B cell (primary cell): ENCODE measurements at regions of chr17 and their contacts with region 1.

Region 1: GRCh38 chr17:5592382-5592781 is 8.1 kb upstream of the NLRP1 start:
- DNase-seq: peak; percentile 63
- ATAC-seq: peak; percentile 31
- H3K4me3 ChIP-seq: no peak overlapping the region
- H3K4me3 Mint-ChIP-seq: no peak overlapping the region
- H3K27ac ChIP-seq: no peak overlapping the region
- H3K27ac Mint-ChIP-seq: no peak overlapping the region
- H3K4me1 ChIP-seq: peaks cover 0 to 1% of the 10 kb centered on the region in 2 donors
- H3K4me1 Mint-ChIP-seq: peaks cover 1% of the 10 kb centered on the region
- H3K27me3 ChIP-seq: peaks cover 0 to 23% (median 3%) of the 10 kb centered on the region in 4 experiments
- H3K27me3 Mint-ChIP-seq: peaks cover 32% of the 10 kb centered on the region
- CTCF ChIP-seq: peak; percentile 76

Region 2: DNA sequence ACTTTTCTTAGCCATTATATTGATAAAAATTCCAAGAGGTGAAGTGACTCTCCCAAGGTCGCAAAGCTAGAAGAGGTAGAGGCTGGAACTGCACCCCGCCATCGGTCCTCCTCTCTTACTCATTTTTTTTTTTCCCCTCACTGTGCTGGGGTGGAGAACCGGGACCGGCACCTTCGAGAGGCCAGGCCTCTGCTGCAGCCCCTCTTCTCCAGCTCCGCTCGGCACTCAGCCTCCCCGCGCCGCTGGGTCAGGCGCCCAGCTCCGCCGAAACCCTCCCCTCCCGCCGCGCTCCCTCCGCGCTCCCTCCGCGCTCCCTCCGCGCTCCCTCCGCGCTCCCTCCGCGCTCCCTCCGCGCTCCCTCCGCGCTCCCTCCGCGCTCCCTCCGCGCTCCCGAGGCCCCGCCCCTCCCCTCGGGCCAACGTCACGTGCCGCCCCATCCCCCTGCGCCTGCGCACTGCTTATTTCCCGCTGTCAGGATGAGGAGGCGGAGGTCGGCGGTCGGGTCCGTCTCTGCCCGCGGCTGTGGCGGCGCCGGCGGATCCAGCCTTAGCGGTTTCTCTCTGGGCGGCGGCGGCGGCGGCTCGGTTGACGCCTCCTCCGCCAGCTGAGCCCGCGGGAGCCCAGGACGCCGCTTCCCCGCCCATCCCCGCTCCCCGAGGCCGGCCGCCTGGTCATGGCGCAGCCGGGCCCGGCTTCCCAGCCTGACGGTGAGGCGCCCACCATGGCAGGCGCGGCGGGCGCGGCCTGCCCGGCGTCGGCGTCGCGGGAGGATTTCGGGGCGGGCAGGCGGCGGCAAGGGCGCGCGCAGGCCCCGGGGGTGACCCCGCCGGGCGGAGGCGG is 310.3 kb before region 1 on chr17 and contains the start of gene RABEP1:
- CTCF ChIA-PET with region 1: no interaction called
- POLR2A ChIA-PET with region 1: no interaction called
- intact Hi-C with region 1: no loop called
- DNase-seq: peak; percentile 94
- ATAC-seq: peak; percentile 85
- H3K4me3 ChIP-seq: peak within 1 kb of the TSS; percentile 63 to 90 (median 75)
- H3K4me3 Mint-ChIP-seq: peak within 1 kb of the TSS; percentile 88
- H3K27ac ChIP-seq: peak within 1 kb of the TSS; percentile 33 to 69
- H3K27ac Mint-ChIP-seq: peak within 1 kb of the TSS; percentile 94
- H3K4me1 ChIP-seq: peaks cover 38 to 44% of the 10 kb centered on the region in 2 donors
- H3K4me1 Mint-ChIP-seq: peaks cover 40% of the 10 kb centered on the region
- H3K27me3 ChIP-seq: no peaks in the 10 kb centered on the region
- H3K27me3 Mint-ChIP-seq: no peaks in the 10 kb centered on the region
- CTCF ChIP-seq: peak; percentile 14
- total RNA-seq, gene RABEP1: 86.1 and 91.1 TPM in 2 replicates

Region 3: GRCh38 chr17:5706577-5707216 is 114.3 kb after region 1 on chr17:
- CTCF ChIA-PET with region 1: interaction called, 38 read pairs
- POLR2A ChIA-PET with region 1: no interaction called
- intact Hi-C with region 1: no loop called
- DNase-seq: peak; percentile 66
- ATAC-seq: peak; percentile 41
- H3K4me3 ChIP-seq: no peak overlapping the region
- H3K4me3 Mint-ChIP-seq: no peak overlapping the region
- H3K27ac ChIP-seq: no peak overlapping the region
- H3K27ac Mint-ChIP-seq: no peak overlapping the region
- H3K4me1 ChIP-seq: no peaks in the 10 kb centered on the region
- H3K4me1 Mint-ChIP-seq: no peaks in the 10 kb centered on the region
- H3K27me3 ChIP-seq: peaks cover 0 to 16% (median 0%) of the 10 kb centered on the region in 4 experiments
- H3K27me3 Mint-ChIP-seq: peaks cover 29% of the 10 kb centered on the region
- CTCF ChIP-seq: peak; percentile 70

Region 4: GRCh38 chr17:6421700-6422604 is 829.6 kb after region 1 on chr17:
- CTCF ChIA-PET with region 1: interaction called, 44 read pairs
- POLR2A ChIA-PET with region 1: no interaction called
- intact Hi-C with region 1: loop called (anchors 1 kb)
- DNase-seq: peak; percentile 74
- ATAC-seq: peak; percentile 51
- H3K4me3 ChIP-seq: no peak overlapping the region
- H3K4me3 Mint-ChIP-seq: no peak overlapping the region
- H3K27ac ChIP-seq: no peak overlapping the region
- H3K27ac Mint-ChIP-seq: no peak overlapping the region
- H3K4me1 ChIP-seq: peaks cover 0 to 4% of the 10 kb centered on the region in 2 donors
- H3K4me1 Mint-ChIP-seq: peaks cover 4% of the 10 kb centered on the region
- H3K27me3 ChIP-seq: peaks cover 0 to 4% (median 0%) of the 10 kb centered on the region in 4 experiments
- H3K27me3 Mint-ChIP-seq: peaks cover 15% of the 10 kb centered on the region
- CTCF ChIP-seq: peak; percentile 81

Region 5: GRCh38 chr17:6427279-6427781 is 834.9 kb after region 1 on chr17:
- CTCF ChIA-PET with region 1: interaction called, 44 read pairs
- POLR2A ChIA-PET with region 1: no interaction called
- intact Hi-C with region 1: loop called (anchors 1 kb)
- DNase-seq: peak; percentile 47
- ATAC-seq: no peak
- H3K4me3 ChIP-seq: no peak overlapping the region
- H3K4me3 Mint-ChIP-seq: peak overlapping the region; percentile 20
- H3K27ac ChIP-seq: no peak overlapping the region
- H3K27ac Mint-ChIP-seq: no peak overlapping the region
- H3K4me1 ChIP-seq: peaks cover 9 to 13% of the 10 kb centered on the region in 2 donors
- H3K4me1 Mint-ChIP-seq: peaks cover 13% of the 10 kb centered on the region
- H3K27me3 ChIP-seq: peaks cover 0 to 6% (median 0%) of the 10 kb centered on the region in 4 experiments
- H3K27me3 Mint-ChIP-seq: peaks cover 12% of the 10 kb centered on the region
- CTCF ChIP-seq: no peak

Region 6: DNA sequence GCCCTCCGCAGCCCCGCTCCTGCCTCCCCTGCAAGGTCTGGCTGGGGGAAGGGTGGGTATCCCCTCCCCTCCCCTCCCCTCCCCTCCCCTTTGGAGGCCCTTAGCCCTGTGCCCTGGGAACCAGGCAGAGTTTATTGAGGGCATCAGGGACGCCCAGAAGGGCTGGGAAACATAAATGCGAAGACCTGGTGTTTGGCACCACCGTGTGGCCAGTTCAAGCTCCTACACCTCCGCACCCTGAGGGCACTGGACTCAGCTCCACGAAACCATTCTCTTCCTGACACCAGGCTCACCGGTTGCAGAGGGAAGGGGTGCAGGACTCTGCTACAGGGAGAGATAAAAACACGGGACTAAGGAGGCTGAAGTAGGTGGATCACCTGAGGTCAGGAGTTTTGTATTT is 843.6 kb after region 1 on chr17:
- CTCF ChIA-PET with region 1: interaction called, 18 read pairs
- POLR2A ChIA-PET with region 1: interaction called, 3 read pairs
- intact Hi-C with region 1: loop called (anchors 1 kb)
- DNase-seq: peak; percentile 74
- ATAC-seq: peak; percentile 86
- H3K4me3 ChIP-seq: no peak overlapping the region
- H3K4me3 Mint-ChIP-seq: no peak overlapping the region
- H3K27ac ChIP-seq: no peak overlapping the region
- H3K27ac Mint-ChIP-seq: peak overlapping the region; percentile 64
- H3K4me1 ChIP-seq: no peaks in the 10 kb centered on the region
- H3K4me1 Mint-ChIP-seq: peaks cover 2% of the 10 kb centered on the region
- H3K27me3 ChIP-seq: peaks cover 0 to 15% (median 6%) of the 10 kb centered on the region in 4 experiments
- H3K27me3 Mint-ChIP-seq: peaks cover 36% of the 10 kb centered on the region
- CTCF ChIP-seq: peak; percentile 84